Mucosa of descending colon (tissue), 3 donors: ENCODE measurements at regions of chr6 and their contacts with region 1.

Region 1: DNA sequence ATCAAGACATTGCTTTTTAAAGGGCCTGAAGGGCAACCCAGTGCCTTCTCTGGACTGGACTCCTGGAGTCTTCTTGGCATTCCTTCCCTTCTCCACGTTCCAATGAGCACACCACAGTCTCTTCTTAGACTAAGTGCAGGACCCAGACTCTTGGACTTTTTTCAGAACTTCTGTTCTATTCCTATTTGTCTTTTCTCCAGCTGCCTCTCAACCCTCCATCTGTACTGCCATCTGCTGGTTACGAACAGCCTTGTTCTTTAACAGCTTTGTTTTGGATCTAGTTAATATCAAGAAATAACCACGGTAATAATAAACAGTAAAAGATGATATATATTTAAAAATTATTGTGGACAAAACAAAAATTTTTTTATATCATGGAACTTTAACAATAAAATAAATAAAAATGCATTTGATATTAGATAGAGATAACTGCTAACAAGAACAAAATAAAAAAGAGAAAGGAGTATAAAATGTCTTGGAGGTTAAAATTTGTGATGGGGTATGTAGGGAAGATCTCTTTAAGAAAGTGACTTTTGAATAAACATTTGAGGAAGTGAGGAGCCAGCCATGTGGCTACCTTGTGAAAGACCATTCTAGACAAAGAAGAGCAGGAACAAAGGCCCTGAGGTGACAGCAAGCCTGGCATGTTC is 105.1 kb upstream of the HCRTR2 start:
- DNase-seq: peak in 1 of 3 donors; percentile 74
- ATAC-seq: peak; percentile 47
- H3K4me3 ChIP-seq: no peak overlapping the region
- H3K4me1 ChIP-seq: no peaks in the 10 kb centered on the region
- CTCF ChIP-seq: peak; percentile 51

Region 2: GRCh38 chr6:53979468-53980067 is 1089.7 kb before region 1 on chr6:
- intact Hi-C with region 1: loop called in 1 of 2 experiments (anchors 10 kb)
- DNase-seq: peak in 1 of 3 donors; percentile 54
- ATAC-seq: peak; percentile 45
- H3K4me3 ChIP-seq: no peak overlapping the region
- H3K4me1 ChIP-seq: no peaks in the 10 kb centered on the region
- CTCF ChIP-seq: peak; percentile 65

Region 3: DNA sequence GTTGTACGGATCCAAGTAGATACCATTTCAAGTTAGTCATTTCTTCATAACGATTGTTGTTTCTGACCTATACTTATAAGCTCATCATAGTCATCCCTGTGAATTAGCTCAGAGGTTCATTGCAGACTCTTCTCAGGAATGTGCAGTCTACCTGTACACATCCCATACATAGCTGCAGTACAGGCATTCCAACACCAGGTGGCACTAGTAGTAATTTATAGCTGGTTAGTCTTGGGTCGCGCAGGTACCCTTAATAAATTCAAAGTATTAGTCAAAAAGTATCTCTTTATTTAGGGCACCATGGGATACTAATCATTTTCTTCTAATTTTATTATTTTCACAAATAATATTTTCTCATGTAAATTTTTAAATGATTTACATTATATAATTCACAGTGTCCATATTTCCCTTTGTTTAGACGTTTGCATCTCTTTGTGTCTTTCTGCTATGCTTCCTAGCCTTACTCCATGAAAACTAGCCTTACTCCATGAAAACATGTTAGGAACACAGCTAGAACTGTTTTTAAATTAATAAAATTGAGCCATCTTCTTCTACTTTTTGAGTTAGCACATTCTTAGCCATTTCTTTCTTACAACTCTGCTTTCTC is 351.3 kb before region 1 on chr6:
- intact Hi-C with region 1: loop called in 1 of 2 experiments (anchors 10 kb)
- DNase-seq: peak in 2 of 3 donors; percentile 31 to 97
- ATAC-seq: peak; percentile 86
- H3K4me3 ChIP-seq: no peak overlapping the region
- H3K4me1 ChIP-seq: no peaks in the 10 kb centered on the region
- CTCF ChIP-seq: peak; percentile 77

Region 4: DNA sequence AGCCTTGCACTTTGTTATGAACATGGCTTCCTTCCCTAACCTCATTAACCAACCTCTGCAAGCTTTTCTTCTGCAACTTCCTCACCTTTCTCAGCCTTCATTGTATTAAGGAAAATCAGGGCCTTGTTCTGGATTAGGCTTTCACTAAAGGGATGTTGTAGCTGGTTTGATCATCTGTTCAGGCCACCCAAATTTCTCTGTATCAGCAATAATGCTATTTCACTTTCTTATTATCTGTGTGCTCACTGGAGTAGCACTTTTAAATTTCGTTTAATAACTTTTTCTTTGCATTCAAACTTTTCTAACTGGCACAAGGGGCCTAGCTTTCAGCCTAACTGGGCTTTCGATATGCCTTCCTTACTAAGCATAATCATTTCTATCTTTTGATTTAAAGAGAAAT is 354.7 kb after region 1 on chr6:
- intact Hi-C with region 1: no loop called
- DNase-seq: no peak
- ATAC-seq: no peak
- H3K4me3 ChIP-seq: no peak overlapping the region
- H3K4me1 ChIP-seq: no peaks in the 10 kb centered on the region
- CTCF ChIP-seq: no peak